Activated naive CD4-positive, alpha-beta T cell treated with anti-CD3 and anti-CD28 coated beads, Interleukin-2, amount 10 ng/mL, durations not matched to agents 7 days and 5 days (primary cell): ENCODE measurements at regions of chr7 and their contacts with region 1.

Region 1: DNA sequence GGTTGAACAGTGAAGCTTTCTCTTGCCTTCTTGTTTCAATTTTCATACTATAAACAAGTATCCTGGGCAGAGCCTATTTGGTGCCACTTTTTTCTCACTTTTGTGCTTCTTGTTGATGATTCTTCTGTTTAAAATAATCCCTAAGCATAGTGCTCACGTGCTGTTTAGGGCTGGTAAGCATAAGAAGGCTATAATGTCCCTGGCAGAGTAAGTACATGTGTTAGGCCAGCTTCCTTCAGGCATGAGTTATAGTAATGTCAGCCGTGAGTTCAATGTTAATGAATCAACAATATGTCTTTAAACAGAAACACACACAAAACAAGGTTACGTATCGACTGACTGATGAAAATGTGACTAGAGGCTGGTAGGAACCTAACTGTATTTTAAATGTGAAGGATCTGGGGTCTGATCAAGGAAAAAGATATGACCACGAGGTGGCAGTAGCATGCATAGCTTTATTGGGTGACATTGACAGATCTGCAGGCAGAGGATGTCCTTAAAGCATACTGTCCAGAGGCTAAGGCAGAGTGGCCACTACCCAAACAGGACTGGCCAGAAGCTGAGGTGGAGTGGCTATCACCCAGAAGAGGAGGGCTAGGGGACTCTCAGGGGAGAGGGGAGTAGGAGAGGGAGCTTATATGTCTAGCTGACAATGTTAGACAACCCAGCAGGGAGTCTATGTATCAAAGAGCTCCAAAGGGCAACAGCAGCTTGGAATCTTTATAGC is 113.7 kb downstream of the BRAF start:
- DNase-seq: peak; percentile 72
- H3K4me3 Mint-ChIP-seq: no peak overlapping the region
- H3K27ac Mint-ChIP-seq: no peak overlapping the region
- H3K4me1 Mint-ChIP-seq: no peaks in the 10 kb centered on the region
- H3K27me3 Mint-ChIP-seq: no peaks in the 10 kb centered on the region

Region 2: DNA sequence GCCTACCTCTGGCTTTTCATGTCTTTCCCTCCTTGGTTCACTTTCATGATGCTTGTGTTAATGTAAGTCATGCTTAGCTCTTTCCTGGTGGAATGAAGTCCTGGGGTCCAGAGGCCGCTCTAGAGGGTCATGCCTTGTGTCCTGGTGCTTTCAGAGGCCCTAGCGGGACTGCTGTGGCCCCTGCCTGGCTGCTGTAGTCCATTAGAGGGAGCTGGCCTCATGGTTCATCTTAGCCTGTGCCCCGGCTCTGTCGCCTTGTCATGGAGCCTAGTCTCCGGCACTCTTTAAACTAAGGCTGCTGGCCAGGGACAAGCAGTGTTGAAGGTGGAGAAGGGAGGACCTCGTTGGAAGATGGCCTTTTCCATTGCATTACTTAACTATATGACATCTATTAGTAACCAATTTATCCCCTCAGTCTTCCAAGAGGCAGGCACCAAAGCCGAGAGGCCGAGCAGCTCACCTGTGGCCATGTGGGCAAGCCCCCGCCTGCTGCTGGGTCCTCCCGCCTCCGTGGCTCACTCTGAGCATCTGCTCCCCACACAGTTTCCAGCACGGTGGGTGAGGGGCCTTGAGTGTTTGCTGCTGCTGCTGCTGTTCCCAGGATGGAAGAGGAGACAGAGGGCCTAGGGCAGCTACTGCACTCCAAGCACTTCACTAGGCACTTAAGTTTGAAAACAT is 119.5 kb before region 1 on chr7:
- CTCF ChIA-PET with region 1: no interaction called
- DNase-seq: no peak
- H3K4me3 Mint-ChIP-seq: no peak overlapping the region
- H3K27ac Mint-ChIP-seq: no peak overlapping the region
- H3K4me1 Mint-ChIP-seq: peaks cover 11% of the 10 kb centered on the region
- H3K27me3 Mint-ChIP-seq: no peaks in the 10 kb centered on the region

Region 3: DNA sequence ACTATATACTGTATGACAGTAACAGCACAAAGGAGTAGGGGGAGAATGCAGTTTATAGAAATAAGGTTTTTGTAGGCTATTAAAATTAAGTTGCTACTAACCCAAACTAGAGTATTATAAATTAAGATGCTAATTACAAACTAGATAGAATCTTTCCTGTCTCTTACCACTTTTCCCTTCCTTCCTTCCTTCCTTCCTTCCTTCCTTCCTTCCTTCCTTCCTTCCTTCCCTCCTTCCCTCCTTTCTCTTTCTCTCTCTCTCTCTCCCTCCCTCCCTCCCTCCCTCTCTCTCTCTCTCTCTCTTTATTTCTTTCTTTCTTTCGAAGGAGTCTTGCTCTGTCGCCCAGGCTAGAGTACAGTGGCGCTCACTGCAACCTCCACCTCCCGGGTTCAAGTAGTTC is 150.1 kb after region 1 on chr7:
- CTCF ChIA-PET with region 1: interaction called, 11 read pairs
- DNase-seq: no peak
- H3K4me3 Mint-ChIP-seq: no peak overlapping the region
- H3K27ac Mint-ChIP-seq: no peak overlapping the region
- H3K4me1 Mint-ChIP-seq: no peaks in the 10 kb centered on the region
- H3K27me3 Mint-ChIP-seq: no peaks in the 10 kb centered on the region

Region 4: DNA sequence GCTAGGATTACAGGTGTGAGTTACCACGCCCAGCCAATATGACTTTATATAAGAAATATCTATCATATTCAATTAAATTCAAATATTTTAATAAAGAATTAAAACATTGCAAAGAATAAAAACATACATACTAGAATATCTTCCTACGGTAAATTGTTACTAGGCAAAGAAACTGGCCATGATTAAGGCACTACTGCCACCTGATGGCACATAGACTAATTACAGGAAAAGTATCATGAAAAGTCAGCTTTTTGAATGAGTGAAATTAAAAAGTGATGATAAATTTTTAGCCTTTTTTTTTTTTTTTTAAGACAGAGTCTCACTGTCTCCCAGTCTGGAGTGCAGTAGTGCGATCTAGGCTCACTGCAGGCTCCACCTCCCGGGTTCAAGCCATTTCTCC is 172.8 kb after region 1 on chr7:
- CTCF ChIA-PET with region 1: interaction called, 23 read pairs
- DNase-seq: no peak
- H3K4me3 Mint-ChIP-seq: no peak overlapping the region
- H3K27ac Mint-ChIP-seq: no peak overlapping the region
- H3K4me1 Mint-ChIP-seq: no peaks in the 10 kb centered on the region
- H3K27me3 Mint-ChIP-seq: peaks cover 15% of the 10 kb centered on the region

Region 5: GRCh38 chr7:141014524-141015395 is 203.8 kb after region 1 on chr7 and contains the start of gene MRPS33:
- CTCF ChIA-PET with region 1: interaction called, 43 read pairs
- DNase-seq: peak; percentile 96
- H3K4me3 Mint-ChIP-seq: peak within 1 kb of the TSS; percentile 97
- H3K27ac Mint-ChIP-seq: peak within 1 kb of the TSS; percentile 99
- H3K4me1 Mint-ChIP-seq: peaks cover 39% of the 10 kb centered on the region
- H3K27me3 Mint-ChIP-seq: peaks cover 19% of the 10 kb centered on the region

Region 6: DNA sequence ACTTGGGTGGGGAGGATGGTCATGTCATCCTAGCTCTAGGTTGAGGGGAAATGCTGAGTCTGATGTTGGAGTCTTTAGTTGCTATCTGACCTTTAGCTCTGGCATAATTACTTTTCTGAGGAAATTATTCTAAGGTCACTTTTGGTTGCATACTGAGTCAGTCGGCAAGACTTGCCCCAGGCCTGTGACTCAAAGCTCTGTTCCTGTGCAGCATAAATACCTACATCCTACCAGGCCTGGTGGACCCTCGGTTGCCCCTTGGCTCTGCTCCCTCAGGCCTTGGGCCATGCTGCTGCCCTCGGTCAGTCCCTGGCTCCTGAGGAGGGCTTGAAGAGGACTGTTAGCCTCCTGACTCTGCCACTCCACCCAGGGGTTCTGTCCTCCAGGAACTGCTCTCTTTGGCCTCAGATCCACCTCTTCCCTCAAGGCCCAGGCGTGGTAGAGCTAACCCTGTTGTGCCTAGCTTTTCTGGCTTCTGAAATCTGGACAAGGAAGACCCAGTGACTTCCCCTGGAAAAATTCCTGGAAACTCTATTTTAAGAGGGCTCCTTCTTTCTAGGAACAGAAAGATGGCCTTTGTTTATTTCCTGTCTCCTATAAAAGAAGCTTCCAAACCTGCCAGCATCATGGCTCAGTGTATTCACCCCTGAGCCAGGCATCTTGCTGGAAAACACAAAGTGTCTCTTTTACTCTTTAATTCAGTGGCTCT is 334.1 kb after region 1 on chr7:
- CTCF ChIA-PET with region 1: no interaction called
- DNase-seq: no peak
- H3K4me3 Mint-ChIP-seq: no peak overlapping the region
- H3K27ac Mint-ChIP-seq: no peak overlapping the region
- H3K4me1 Mint-ChIP-seq: no peaks in the 10 kb centered on the region
- H3K27me3 Mint-ChIP-seq: peaks cover 7% of the 10 kb centered on the region

Region 7: GRCh38 chr7:141748401-141748800 is 937.4 kb after region 1 on chr7:
- CTCF ChIA-PET with region 1: no interaction called
- DNase-seq: no peak
- H3K4me3 Mint-ChIP-seq: no peak overlapping the region
- H3K27ac Mint-ChIP-seq: no peak overlapping the region
- H3K4me1 Mint-ChIP-seq: peaks cover 3% of the 10 kb centered on the region
- H3K27me3 Mint-ChIP-seq: no peaks in the 10 kb centered on the region